Calu3 (cell line): ENCODE measurements at regions of chr4 and their contacts with region 1.

Region 1: DNA sequence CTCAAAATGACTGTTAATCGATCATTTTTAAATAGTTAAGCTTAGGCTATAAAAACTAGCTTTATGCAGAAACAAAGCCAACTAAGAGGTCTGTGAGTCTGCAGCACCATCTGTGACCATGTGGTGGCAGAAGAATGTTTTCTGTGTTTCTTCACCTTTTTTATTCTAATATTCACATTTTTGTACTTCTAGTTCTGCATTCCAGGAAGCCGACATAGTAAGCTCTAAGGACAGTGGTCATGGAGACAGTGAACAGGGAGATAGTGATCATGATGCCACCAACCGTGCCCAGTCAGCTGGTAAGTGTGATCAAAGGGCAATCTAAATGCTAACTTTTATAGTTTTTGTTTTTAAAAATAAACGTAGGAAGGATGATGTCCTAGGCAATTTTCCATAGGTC is 5.6 kb downstream of the PCDH10 start:
- DNase-seq: peak; percentile 8
- H3K4me3 Mint-ChIP-seq: no peak overlapping the region
- H3K27ac Mint-ChIP-seq: no peak overlapping the region
- H3K4me1 Mint-ChIP-seq: peaks cover 7% of the 10 kb centered on the region
- H3K27me3 Mint-ChIP-seq: no peaks in the 10 kb centered on the region
- CTCF ChIP-seq: peak; percentile 38

Region 2: DNA sequence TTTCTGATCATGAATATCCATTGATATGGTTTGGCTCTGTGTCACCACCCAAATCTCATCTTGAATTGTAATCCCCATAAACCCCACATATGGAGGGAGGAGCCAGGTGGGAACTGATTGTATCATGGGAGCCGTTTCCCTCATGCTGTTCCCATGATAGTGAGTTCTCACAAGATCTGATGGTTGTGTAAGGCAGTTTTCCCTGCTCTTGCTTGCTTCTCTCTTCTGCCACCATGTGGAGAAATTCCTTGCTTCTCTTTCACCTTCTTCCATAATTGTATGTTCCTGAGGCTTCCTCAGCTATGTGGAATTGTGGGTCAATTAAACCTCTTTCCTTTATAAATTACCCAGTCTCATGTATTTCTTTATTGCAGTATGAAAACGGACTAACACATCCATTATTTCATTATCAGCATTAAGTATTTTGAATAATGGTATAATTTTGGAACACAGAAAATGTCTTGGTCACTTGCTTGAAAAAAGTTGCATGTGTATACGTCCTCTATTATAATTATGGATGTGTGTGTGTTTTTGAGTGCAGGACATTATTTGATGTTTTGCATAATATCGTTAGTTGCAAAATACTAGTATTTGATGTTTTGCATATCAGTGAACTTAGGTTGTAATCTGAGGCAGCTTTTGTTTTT is 329.0 kb after region 1 on chr4:
- CTCF ChIA-PET with region 1: no interaction called
- intact Hi-C with region 1: loop called (anchors 5 kb)
- DNase-seq: peak; percentile 4
- H3K4me3 Mint-ChIP-seq: no peak overlapping the region
- H3K27ac Mint-ChIP-seq: no peak overlapping the region
- H3K4me1 Mint-ChIP-seq: no peaks in the 10 kb centered on the region
- H3K27me3 Mint-ChIP-seq: no peaks in the 10 kb centered on the region
- CTCF ChIP-seq: no peak